ENCODE measurements at regions of chr11 and their contacts with region 1.

Region 1: DNA sequence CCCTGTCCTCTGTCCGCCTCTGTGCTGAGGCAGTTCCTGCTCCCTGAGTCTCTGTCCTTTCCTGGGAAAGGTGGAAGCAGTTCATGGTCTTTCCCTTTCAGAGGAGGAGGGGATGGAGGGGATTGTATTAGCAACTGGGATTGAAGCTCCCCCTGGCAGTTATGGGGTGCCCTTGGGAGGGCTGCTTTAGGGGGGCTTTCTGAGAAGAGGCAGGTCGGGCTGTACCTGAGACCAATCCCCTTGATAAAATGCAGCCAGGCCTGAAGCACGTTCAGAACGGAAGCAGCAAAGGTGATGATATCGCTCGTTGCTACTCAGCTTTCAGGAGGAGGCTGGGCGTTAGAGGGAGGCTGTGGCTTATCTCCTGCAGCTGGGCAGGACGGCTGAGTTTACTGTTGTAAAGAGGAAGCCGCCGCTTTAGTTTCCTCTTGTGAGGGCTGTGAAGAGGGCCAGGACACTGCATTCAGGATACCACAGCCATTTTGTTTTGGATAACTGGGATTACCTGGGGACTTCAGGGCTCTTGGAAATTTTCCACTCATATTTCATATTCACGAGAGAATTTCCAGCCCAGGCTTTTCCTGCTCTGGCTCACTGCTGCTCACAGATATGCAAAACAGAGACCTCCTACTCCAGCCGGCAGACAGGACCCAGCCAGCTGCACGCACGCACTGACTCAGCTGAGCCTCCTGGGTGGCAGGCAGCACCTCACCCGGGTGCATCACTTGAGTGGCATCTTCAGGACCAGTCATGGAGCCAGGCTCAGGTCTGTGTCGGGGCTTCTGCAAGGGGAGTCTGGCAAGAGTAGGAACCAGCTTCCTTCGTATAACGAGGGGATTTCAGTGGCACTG is 798 bp downstream of the AMPD3 start:
- DNase-seq: peak; percentile 57
- ATAC-seq: peak; percentile 9 to 27
- H3K4me3 ChIP-seq: peak overlapping the region; percentile 76 to 84 (median 78)
- H3K27ac ChIP-seq: peak overlapping the region; percentile 94 to 100 (median 98)
- H3K4me1 ChIP-seq: peaks cover 51 to 56% of the 10 kb centered on the region in 2 donors
- H3K27me3 ChIP-seq: no peaks in the 10 kb centered on the region
- CTCF ChIP-seq: no peak
- POLR2A ChIP-seq: peak; percentile 84 to 87

Region 2: GRCh38 chr11:10387206-10388083 is 68.4 kb before region 1 on chr11:
- in situ Hi-C with region 1: no loop called
- intact Hi-C with region 1: loop called (anchors 2 kb)
- DNase-seq: peak; percentile 52 to 76
- ATAC-seq: peak; percentile 16 to 26
- H3K4me3 ChIP-seq: no peak overlapping the region
- H3K27ac ChIP-seq: peak overlapping the region; percentile 48 to 68 (median 66)
- H3K4me1 ChIP-seq: peaks cover 24 to 28% of the 10 kb centered on the region in 2 donors
- H3K27me3 ChIP-seq: no peaks in the 10 kb centered on the region
- CTCF ChIP-seq: no peak
- POLR2A ChIP-seq: no peak

Region 3: DNA sequence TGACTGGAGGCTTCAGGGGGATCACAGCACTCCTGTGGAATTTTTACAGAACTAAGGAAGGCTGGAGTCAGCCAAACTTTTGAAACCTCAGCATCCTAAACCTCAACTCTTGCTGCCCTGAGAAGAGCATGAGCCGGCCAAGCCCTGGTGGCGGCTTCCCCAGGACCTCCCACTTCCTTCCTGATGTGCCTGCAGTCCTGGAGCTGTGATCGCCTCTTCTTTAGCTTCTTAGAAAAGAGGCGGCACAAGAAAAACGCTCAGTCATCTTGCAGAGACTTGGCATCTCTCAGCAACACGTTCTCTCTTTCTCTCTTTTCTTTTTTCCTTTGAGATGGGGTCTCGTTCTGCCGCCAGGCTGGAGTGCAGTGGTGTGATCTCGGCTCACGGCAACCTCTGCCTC is 41.2 kb before region 1 on chr11:
- in situ Hi-C with region 1: loop called in 1 of 4 experiments (anchors 5 kb)
- intact Hi-C with region 1: no loop called
- DNase-seq: peak in 1 of 2 donors; percentile 60
- ATAC-seq: no peak
- H3K4me3 ChIP-seq: no peak overlapping the region
- H3K27ac ChIP-seq: peak overlapping the region in 1 of 4 donors; percentile 41
- H3K4me1 ChIP-seq: peaks cover 21% of the 10 kb centered on the region in 2 donors
- H3K27me3 ChIP-seq: no peaks in the 10 kb centered on the region
- CTCF ChIP-seq: no peak
- POLR2A ChIP-seq: no peak

Region 4: DNA sequence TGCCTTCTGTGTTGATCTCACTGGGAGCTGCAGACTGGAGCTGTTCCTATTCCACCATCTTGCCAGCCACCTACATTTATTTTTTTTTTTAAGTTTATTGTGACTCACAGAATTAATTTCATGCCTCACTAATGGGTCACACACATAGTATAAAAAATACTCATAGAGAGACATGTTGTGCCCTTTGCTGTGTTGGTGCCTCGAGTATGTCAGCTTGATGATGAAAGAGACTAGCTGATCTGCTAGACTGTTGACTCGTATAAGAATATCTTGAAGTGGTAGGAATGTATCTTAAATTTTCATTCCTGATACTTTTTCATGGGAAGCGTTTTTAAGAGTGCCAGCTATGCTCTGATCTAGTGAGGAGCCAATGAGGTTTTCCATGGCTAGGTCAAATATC is 29.4 kb before region 1 on chr11:
- in situ Hi-C with region 1: no loop called
- intact Hi-C with region 1: no loop called
- DNase-seq: no peak
- ATAC-seq: no peak
- H3K4me3 ChIP-seq: no peak overlapping the region
- H3K27ac ChIP-seq: no peak overlapping the region
- H3K4me1 ChIP-seq: no peaks in the 10 kb centered on the region
- H3K27me3 ChIP-seq: no peaks in the 10 kb centered on the region
- CTCF ChIP-seq: no peak
- POLR2A ChIP-seq: no peak

Region 5: GRCh38 chr11:10490398-10491241 is 34.8 kb after region 1 on chr11:
- in situ Hi-C with region 1: no loop called
- intact Hi-C with region 1: loop called (anchors 1 kb)
- DNase-seq: peak; percentile 95 to 96
- ATAC-seq: peak; percentile 92 to 95
- H3K4me3 ChIP-seq: no peak overlapping the region
- H3K27ac ChIP-seq: peak overlapping the region; percentile 86 to 90 (median 88)
- H3K4me1 ChIP-seq: peaks cover 28 to 29% of the 10 kb centered on the region in 2 donors
- H3K27me3 ChIP-seq: no peaks in the 10 kb centered on the region
- CTCF ChIP-seq: no peak
- POLR2A ChIP-seq: no peak

Region 6: GRCh38 chr11:10605941-10606381 is 150.1 kb after region 1 on chr11:
- in situ Hi-C with region 1: no loop called
- intact Hi-C with region 1: loop called (anchors 2 kb)
- DNase-seq: peak in 1 of 2 donors; percentile 54
- ATAC-seq: no peak
- H3K4me3 ChIP-seq: no peak overlapping the region
- H3K27ac ChIP-seq: peak overlapping the region in 3 of 4 donors; percentile 30 to 93 (median 36)
- H3K4me1 ChIP-seq: peaks cover 38 to 43% of the 10 kb centered on the region in 2 donors
- H3K27me3 ChIP-seq: no peaks in the 10 kb centered on the region
- CTCF ChIP-seq: no peak
- POLR2A ChIP-seq: no peak